Ovary (tissue), 10 donors: ENCODE measurements at regions of chr7 and their contacts with region 1.

Region 1: DNA sequence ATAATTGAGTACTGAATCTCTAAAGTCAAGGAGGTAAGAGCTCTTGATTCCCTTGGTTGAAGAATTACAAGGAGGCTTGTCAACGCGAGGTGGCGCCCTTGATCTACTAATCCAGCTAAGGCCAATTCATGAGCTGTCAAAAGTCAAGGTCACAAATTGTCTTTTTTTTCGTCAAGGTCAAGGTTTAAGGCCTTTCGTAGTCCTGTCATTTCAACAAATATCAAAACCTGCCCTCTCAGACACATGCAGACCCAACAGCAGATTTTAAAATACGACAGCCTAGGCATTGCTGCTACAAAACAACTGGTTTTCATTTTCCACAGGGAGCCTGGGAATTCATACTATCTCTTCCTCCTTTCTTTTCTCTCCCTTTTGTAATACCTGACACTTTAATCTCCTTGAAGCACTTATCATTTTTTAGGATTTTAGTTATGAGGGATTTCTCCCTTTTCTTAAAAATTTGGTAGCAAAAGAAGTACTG is 3.6 kb downstream of the HOXA13 start:
- DNase-seq: peak; percentile 54 to 86 (median 79)
- H3K4me3 ChIP-seq: no peak overlapping the region
- H3K27ac ChIP-seq: no peak overlapping the region
- H3K4me1 ChIP-seq: peaks cover 6% of the 10 kb centered on the region
- H3K27me3 ChIP-seq: peaks cover 14% of the 10 kb centered on the region
- CTCF ChIP-seq: peak in 2 of 3 donors; percentile 47 to 56
- EP300 ChIP-seq: no peak
- POLR2A ChIP-seq: no peak

Region 2: DNA sequence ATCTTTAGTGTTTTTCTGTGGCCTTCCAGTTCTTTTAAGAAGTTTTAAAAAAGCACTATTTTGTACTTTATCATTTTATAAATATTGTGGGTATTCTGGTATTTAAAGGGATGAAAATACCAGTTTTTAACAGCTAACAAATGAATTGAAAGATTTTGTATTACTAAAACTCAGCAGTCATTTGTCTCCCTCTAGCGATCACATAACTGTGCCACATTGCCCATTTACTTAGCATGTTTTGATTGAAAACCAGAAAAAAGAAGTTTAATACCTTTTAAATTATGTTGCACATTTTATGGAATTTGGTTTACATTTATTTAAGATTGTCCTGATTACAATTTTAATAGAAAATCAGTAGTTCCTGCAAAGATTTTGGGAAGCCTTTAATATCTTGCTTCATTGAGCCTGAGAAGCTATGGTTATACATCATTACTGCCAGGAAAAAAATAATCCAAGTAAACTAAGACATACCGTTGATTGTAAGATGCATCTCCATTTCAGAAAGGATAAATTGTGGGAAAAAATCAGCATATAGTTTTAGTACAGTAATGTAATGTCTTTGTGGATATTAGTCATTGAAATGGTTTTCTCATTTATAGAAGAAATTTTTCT is 578.5 kb after region 1 on chr7:
- intact Hi-C with region 1: loop called in 1 of 4 experiments (anchors 10 kb)
- DNase-seq: no peak
- H3K4me3 ChIP-seq: no peak overlapping the region
- H3K27ac ChIP-seq: no peak overlapping the region
- H3K4me1 ChIP-seq: no peaks in the 10 kb centered on the region
- H3K27me3 ChIP-seq: no peaks in the 10 kb centered on the region
- CTCF ChIP-seq: peak in 2 of 3 donors; percentile 20 to 51
- EP300 ChIP-seq: no peak
- POLR2A ChIP-seq: no peak

Region 3: GRCh38 chr7:27921081-27921836 is 724.9 kb after region 1 on chr7:
- intact Hi-C with region 1: loop called in 2 of 4 experiments (anchors 10 kb)
- DNase-seq: peak in 2 of 5 donors; percentile 15 to 25
- H3K4me3 ChIP-seq: no peak overlapping the region
- H3K27ac ChIP-seq: no peak overlapping the region
- H3K4me1 ChIP-seq: no peaks in the 10 kb centered on the region
- H3K27me3 ChIP-seq: no peaks in the 10 kb centered on the region
- CTCF ChIP-seq: peak in 1 of 3 donors; percentile 55
- EP300 ChIP-seq: no peak
- POLR2A ChIP-seq: no peak

Region 4: DNA sequence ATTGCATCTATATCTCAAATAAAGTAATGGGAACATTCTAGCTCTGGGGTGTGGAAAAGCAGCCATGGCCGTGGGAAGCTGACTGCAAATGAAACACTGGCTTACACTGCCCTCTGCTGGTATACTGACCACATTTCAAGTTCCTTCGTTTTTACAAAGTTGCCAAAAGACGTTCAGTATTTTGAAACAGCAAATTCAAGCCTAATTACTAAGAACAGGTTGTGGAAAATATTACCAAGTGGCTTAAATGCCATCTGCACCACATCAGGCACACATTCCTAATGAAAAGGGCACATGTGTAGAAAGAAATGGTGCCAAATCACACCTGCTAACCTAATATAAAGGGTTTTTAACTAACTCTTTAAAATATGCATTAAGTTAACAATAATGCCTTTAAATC is 900.4 kb after region 1 on chr7:
- intact Hi-C with region 1: loop called in 1 of 4 experiments (anchors 5 kb)
- DNase-seq: peak; percentile 42 to 73 (median 49)
- H3K4me3 ChIP-seq: no peak overlapping the region
- H3K27ac ChIP-seq: no peak overlapping the region
- H3K4me1 ChIP-seq: no peaks in the 10 kb centered on the region
- H3K27me3 ChIP-seq: no peaks in the 10 kb centered on the region
- CTCF ChIP-seq: peak in 2 of 3 donors; percentile 84 to 86
- EP300 ChIP-seq: no peak
- POLR2A ChIP-seq: no peak